CD8-positive, alpha-beta memory T cell (primary cell): ENCODE measurements at regions of chr2 and their contacts with region 1.

Region 1: DNA sequence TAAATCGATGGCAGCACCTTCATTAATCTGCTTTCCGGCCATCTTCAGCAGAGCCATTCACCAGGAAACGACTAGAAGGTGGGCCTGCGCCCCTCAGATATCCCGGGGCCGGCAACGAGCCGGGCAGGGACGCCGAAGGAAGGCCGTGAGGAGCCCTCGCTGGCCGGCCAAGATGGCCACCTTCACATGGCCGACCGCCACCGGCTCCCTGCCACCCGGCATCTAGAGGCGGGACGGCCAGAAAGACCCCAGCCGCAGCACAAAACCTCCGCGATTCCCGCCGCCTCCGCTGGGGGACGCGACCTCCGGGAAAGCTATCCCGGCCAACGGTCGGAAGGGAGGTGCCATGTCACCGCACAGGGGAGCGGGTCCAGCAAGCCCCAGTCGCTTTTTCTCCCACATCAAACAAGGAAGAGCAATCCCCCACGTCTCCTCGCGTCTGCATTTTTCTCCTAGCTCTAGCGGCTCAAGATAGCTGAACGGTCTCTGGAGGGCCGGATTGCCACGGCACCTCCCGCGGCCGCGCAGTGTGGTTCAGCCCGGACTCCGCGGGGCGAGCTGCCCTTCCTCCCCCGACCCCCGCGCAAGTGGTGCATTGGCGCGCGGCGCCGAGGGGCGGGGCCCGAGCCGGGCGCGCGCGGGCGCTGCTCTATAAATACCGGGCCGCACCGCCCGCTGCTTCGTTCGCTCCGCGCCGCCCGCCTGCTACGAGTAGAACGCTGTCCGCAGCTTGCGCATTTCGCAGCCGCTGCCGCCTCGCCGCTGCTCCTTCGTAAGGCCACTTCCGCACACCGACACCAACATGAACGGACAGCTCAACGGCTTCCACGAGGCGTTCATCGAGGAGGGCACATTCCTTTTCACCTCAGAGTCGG is at the start of gene MAT2A:
- DNase-seq: peak; percentile 77 to 89 (median 87)
- H3K4me3 ChIP-seq: peak within 1 kb of the TSS; percentile 91
- H3K4me3 Mint-ChIP-seq: peak within 1 kb of the TSS; percentile 90 to 98 (median 94)
- H3K27ac ChIP-seq: peak within 1 kb of the TSS; percentile 90
- H3K27ac Mint-ChIP-seq: peak within 1 kb of the TSS; percentile 84 to 97 (median 96)
- H3K4me1 ChIP-seq: peaks cover 25% of the 10 kb centered on the region
- H3K4me1 Mint-ChIP-seq: peaks cover 38 to 51% (median 47%) of the 10 kb centered on the region in 3 donors
- H3K27me3 ChIP-seq: no peaks in the 10 kb centered on the region
- H3K27me3 Mint-ChIP-seq: no peaks in the 10 kb centered on the region
- total RNA-seq, gene MAT2A: 371 to 376 TPM

Region 2: DNA sequence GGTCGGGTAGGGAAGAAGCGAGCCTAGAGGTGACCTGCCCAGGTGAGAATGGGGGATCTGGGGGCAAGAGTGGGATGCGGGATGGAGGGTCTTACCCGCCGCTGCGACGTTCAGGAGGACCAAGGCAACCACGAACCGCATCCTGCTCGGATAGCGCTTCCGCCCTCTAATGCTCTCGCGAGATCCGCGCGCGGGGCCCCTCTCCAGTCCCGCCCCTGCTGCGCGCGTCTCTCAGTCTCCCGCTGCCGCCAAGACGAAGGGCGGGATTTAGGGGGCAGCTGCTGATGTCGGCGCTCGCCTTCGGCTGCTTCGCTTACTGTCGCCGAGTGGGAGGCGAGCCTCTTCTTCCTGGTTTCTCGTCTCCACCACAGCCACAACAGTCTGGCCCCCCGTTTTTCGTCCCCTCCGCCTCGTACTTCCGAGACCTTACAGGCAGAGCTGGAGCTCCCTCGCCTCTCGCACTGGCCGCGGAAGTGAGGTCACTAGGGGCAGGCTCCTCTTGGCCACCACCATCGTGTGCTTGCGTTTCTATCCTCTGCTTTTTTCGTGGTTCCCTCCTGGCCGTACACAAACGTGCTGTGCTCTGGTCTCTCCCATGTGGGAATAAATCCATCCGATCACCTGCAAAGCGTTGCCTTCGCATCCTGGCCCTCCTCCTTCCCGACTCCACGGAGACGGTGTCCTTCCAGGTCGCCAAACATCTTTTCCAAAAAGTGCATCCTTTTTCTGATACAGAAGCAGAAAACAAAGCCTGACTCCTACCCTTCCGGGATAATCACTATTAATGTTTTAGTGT is 210.7 kb before region 1 on chr2 and contains the start of gene TGOLN2:
- CTCF ChIA-PET with region 1: interaction called, 3 read pairs
- POLR2A ChIA-PET with region 1: interaction called, 31 read pairs
- DNase-seq: peak; percentile 90 to 96 (median 94)
- H3K4me3 ChIP-seq: peak within 1 kb of the TSS; percentile 86
- H3K4me3 Mint-ChIP-seq: peak within 1 kb of the TSS; percentile 92 to 100 (median 99)
- H3K27ac ChIP-seq: peak within 1 kb of the TSS; percentile 98
- H3K27ac Mint-ChIP-seq: peak within 1 kb of the TSS; percentile 94 to 100 (median 99)
- H3K4me1 ChIP-seq: peaks cover 34% of the 10 kb centered on the region
- H3K4me1 Mint-ChIP-seq: peaks cover 37 to 48% (median 44%) of the 10 kb centered on the region in 3 donors
- H3K27me3 ChIP-seq: no peaks in the 10 kb centered on the region
- H3K27me3 Mint-ChIP-seq: peaks cover 0 to 1% of the 10 kb centered on the region in 2 donors
- total RNA-seq, gene TGOLN2: 93.4 to 95.6 TPM

Region 3: DNA sequence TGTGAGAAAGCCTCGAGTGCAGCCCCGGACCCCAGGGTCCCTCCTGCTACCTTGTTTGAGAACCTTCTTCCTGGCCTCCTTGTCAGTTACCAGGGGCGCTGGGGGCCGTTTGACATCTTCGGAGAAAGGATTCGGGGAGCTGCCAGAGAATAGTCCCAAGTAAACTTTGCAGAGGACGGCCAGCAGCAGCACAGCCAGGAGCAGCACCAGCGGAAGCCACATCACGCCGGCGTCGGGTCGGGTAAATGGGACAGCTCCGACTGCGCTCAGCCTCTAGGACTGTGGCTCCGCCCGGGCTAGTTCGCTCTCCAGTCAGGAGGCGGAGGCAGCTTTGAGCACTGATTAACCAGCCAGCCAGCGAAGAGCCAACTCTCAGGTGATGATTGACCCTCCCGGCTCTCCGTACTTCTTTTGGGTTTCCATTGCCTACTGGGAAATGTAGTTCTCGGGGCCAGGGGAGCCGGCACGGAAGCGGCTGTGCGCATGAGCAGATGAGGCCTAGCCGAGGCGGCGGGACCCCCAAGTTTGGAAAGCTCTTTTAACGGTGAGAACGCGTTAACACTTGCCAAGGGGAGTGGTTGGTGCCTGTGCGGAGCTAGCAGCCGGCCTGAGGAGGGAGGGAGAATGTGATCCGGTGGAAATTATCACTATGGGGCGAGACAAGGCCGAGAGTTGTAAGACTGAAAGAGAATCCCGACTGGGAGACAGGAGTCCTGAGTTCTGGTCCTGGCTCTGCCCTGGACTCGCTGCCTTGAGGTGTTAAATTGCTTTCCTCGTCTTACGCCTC is 184.2 kb before region 1 on chr2 and contains the starts of genes ELMOD3 and RETSAT:
- CTCF ChIA-PET with region 1: interaction called, 3 read pairs
- POLR2A ChIA-PET with region 1: interaction called, 18 read pairs
- DNase-seq: peak; percentile 93 to 98 (median 98)
- H3K4me3 ChIP-seq: peak within 1 kb of the TSS; percentile 98
- H3K4me3 Mint-ChIP-seq: peak within 1 kb of the TSS; percentile 97 to 100 (median 99)
- H3K27ac ChIP-seq: peak within 1 kb of the TSS; percentile 89
- H3K27ac Mint-ChIP-seq: peak within 1 kb of the TSS; percentile 94 to 100 (median 100)
- H3K4me1 ChIP-seq: peaks cover 28% of the 10 kb centered on the region
- H3K4me1 Mint-ChIP-seq: peaks cover 45 to 71% (median 58%) of the 10 kb centered on the region in 3 donors
- H3K27me3 ChIP-seq: no peaks in the 10 kb centered on the region
- H3K27me3 Mint-ChIP-seq: no peaks in the 10 kb centered on the region
- total RNA-seq, gene ELMOD3: 13.6 to 14.4 TPM
- total RNA-seq, gene RETSAT: 33.4 to 36.0 TPM

Region 4: GRCh38 chr2:85420536-85421259 is 118.0 kb before region 1 on chr2:
- CTCF ChIA-PET with region 1: interaction called, 34 read pairs
- POLR2A ChIA-PET with region 1: interaction called, 20 read pairs
- DNase-seq: peak; percentile 80 to 90 (median 83)
- H3K4me3 ChIP-seq: peak overlapping the region; percentile 29
- H3K4me3 Mint-ChIP-seq: peak overlapping the region; percentile 57 to 90 (median 74)
- H3K27ac ChIP-seq: peak overlapping the region; percentile 45
- H3K27ac Mint-ChIP-seq: peak overlapping the region in 7 of 8 donors; percentile 18 to 97 (median 61)
- H3K4me1 ChIP-seq: peaks cover 27% of the 10 kb centered on the region
- H3K4me1 Mint-ChIP-seq: peaks cover 12 to 25% (median 16%) of the 10 kb centered on the region in 3 donors
- H3K27me3 ChIP-seq: no peaks in the 10 kb centered on the region
- H3K27me3 Mint-ChIP-seq: peaks cover 0 to 1% of the 10 kb centered on the region in 2 donors

Region 5: DNA sequence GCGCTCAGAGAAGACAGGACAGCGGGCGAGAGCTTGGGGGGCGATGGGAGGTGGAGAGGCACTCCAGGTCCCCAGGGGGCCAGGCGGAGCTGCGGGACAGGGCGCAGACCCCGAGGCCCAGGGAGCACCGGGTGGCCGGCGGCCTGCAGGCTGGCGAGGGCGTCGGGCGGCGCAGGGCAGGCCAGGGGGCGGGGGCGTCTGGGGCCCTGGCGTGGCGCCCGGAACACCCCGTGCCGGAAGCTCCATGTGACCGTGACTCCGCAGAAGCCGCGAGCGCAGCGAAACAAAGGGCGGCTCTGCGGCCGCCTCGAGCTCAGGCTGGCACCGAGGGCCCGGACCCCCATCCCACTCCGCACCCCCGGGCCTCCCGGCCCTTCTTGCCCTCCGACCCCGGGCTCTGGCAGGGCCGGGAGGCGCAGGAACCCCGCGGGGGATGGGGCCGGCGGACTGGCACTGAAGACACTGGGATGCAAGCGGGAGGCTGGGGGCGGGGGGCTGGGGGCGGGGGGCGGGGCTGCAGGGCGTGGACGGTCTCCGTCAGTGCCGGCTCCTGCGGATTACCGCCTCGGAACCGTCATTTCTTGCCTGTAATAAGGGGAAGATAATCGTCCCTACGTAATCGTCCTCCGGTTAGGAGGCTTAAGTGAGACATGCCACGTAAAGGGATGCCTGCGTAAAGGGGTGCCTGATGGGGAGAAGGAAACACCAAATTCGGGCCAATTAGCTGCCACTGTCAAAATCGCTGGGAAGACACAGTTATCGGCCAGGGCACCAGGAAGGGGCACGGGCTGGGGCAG is 101.0 kb before region 1 on chr2:
- CTCF ChIA-PET with region 1: interaction called, 11 read pairs
- POLR2A ChIA-PET with region 1: interaction called, 39 read pairs
- DNase-seq: peak; percentile 63 to 83 (median 75)
- H3K4me3 ChIP-seq: peak overlapping the region; percentile 32
- H3K4me3 Mint-ChIP-seq: peak overlapping the region; percentile 75 to 94 (median 88)
- H3K27ac ChIP-seq: peak overlapping the region; percentile 53
- H3K27ac Mint-ChIP-seq: peak overlapping the region; percentile 91 to 100 (median 95)
- H3K4me1 ChIP-seq: peaks cover 22% of the 10 kb centered on the region
- H3K4me1 Mint-ChIP-seq: peaks cover 12 to 27% (median 17%) of the 10 kb centered on the region in 3 donors
- H3K27me3 ChIP-seq: no peaks in the 10 kb centered on the region
- H3K27me3 Mint-ChIP-seq: peaks cover 0 to 1% of the 10 kb centered on the region in 2 donors

Region 6: GRCh38 chr2:85522090-85522647 is 16.6 kb before region 1 on chr2:
- CTCF ChIA-PET with region 1: no interaction called
- POLR2A ChIA-PET with region 1: no interaction called
- DNase-seq: no peak
- H3K4me3 ChIP-seq: no peak overlapping the region
- H3K4me3 Mint-ChIP-seq: no peak overlapping the region
- H3K27ac ChIP-seq: no peak overlapping the region
- H3K27ac Mint-ChIP-seq: no peak overlapping the region
- H3K4me1 ChIP-seq: no peaks in the 10 kb centered on the region
- H3K4me1 Mint-ChIP-seq: no peaks in the 10 kb centered on the region
- H3K27me3 ChIP-seq: no peaks in the 10 kb centered on the region
- H3K27me3 Mint-ChIP-seq: peaks cover 3 to 12% of the 10 kb centered on the region in 2 donors

Region 7: DNA sequence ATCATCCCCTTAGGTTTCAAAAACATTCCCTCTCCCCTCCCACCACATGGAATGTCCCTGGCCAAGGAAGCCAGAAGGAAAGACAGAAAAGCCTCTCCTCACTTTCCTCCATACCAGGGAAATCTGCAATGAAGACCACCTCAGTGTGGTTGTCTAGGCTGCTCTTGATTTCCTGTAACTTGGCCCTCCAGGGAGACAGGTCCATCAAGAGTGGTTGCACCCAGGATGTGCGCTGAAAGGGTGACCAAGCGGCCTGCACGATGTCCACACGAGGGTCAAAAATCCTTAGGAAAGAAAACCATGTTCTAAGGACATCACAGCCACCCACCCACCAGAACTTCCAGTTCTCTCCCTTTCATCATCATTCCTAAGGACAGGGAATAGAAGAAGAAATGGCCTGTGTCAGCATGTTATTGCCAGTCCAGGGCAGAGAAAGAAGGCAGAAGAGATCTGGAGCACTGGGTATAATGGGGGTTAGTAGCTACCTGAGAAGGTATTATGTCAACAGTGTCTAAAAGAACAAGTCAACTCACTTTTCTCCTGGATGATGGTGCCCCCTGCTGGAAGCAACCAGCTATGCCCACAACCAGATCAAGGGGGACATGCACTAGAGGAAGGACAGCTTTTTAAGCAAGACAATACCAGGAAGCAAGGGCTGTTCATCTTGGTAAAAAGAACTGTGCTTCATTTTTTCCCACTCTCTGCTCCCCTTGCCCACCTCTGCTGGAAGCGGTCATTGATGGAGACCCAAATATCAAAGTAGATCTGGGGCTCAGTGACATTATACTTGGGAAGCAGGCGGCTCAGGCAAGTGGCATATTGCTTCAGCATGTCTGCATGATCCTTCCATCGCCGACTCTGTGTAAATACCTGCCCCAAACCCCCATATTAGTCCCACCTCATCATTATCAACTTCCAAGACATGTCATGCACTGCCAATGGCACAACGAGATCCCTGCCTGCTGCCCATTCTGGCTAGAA is 13.3 kb after region 1 on chr2:
- CTCF ChIA-PET with region 1: interaction called, 66 read pairs
- POLR2A ChIA-PET with region 1: interaction called, 21 read pairs
- DNase-seq: peak; percentile 79 to 91 (median 84)
- H3K4me3 ChIP-seq: no peak overlapping the region
- H3K4me3 Mint-ChIP-seq: peak overlapping the region in 1 of 7 donors; percentile 1
- H3K27ac ChIP-seq: no peak overlapping the region
- H3K27ac Mint-ChIP-seq: peak overlapping the region in 5 of 8 donors; percentile 11 to 61 (median 23)
- H3K4me1 ChIP-seq: no peaks in the 10 kb centered on the region
- H3K4me1 Mint-ChIP-seq: peaks cover 3 to 6% (median 5%) of the 10 kb centered on the region in 3 donors
- H3K27me3 ChIP-seq: no peaks in the 10 kb centered on the region
- H3K27me3 Mint-ChIP-seq: no peaks in the 10 kb centered on the region

Region 8: GRCh38 chr2:85561317-85561979 is 22.7 kb after region 1 on chr2 and contains the start of gene GGCX:
- CTCF ChIA-PET with region 1: no interaction called
- POLR2A ChIA-PET with region 1: interaction called, 10 read pairs
- DNase-seq: peak; percentile 86 to 95 (median 91)
- H3K4me3 ChIP-seq: peak within 1 kb of the TSS; percentile 87
- H3K4me3 Mint-ChIP-seq: peak within 1 kb of the TSS; percentile 95 to 98 (median 97)
- H3K27ac ChIP-seq: peak within 1 kb of the TSS; percentile 88
- H3K27ac Mint-ChIP-seq: peak within 1 kb of the TSS; percentile 90 to 98 (median 96)
- H3K4me1 ChIP-seq: peaks cover 12% of the 10 kb centered on the region
- H3K4me1 Mint-ChIP-seq: peaks cover 27 to 31% (median 30%) of the 10 kb centered on the region in 3 donors
- H3K27me3 ChIP-seq: no peaks in the 10 kb centered on the region
- H3K27me3 Mint-ChIP-seq: no peaks in the 10 kb centered on the region
- total RNA-seq, gene GGCX: 22.3 to 23.3 TPM